Tibial artery (tissue), 4 donors: ENCODE measurements at regions of chr11 and their contacts with region 1.

Region 1: DNA sequence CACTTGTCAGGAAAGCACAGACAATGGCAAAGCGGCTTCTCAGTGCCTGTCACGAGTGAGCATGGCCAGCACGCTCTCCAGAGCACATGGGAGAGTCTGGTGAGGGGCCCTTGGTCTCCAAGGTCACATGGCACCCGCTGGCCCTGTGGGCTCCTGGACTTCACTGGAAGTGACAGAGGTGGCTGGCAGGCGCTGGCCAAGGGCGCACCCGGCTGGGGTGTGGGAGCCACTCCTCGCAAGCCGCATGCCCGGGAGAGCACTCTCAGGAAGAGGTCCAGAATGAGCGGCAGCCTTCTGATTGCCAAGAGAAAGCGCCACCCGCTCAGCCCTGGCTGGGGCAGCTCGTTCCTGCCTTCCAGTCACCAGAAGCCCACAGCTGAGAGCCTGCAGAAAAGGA is 17.1 kb upstream of the MOB2 start:
- DNase-seq: peak in 1 of 2 donors; percentile 93
- H3K4me3 ChIP-seq: peak overlapping the region in 1 of 2 donors; percentile 12
- H3K27ac ChIP-seq: peak overlapping the region; percentile 82 to 87
- H3K4me1 ChIP-seq: peaks cover 0 to 75% (median 65%) of the 10 kb centered on the region in 4 donors
- H3K27me3 ChIP-seq: no peaks in the 10 kb centered on the region
- CTCF ChIP-seq: no peak

Region 2: DNA sequence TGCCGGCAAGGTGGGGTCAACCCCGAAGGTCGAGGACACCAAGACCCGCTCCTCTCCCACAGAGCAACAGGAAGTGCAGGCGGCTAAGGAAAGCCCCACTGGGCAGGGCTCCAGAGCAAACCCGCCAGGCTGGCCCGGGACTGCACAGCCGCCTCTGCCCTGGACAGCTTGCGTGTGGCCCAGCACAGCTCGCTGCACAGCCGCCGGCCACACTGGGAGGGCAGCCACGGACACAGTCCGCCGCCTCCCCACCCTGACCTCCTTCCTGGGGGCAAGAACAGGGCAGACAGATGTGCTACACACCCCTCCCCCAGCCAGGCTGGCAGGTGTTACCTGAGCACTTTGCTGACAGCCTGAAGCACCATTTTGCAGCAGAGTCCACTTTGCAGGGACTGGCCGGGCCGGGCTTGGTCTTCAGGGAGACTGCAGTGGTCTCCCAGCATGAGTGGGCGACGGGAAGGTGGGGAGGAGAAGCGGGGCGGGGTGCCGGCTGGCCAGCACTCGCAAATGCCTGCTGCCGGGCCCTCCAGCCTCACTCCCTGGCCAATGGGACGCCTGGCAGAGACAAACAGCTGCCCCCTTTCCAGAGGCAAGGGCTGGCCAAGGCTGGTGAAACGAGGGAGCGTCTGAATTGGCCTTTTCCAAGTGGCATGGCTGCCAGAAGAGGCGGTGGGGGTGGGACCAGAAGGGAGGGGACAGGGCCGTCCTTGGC is 17.4 kb before region 1 on chr11 and contains the start of gene MOB2:
- intact Hi-C with region 1: loop called (anchors 2 kb)
- DNase-seq: peak; percentile 53 to 96
- H3K4me3 ChIP-seq: peak within 1 kb of the TSS; percentile 58 to 81
- H3K27ac ChIP-seq: peak within 1 kb of the TSS; percentile 94 to 96
- H3K4me1 ChIP-seq: peaks cover 0 to 86% (median 69%) of the 10 kb centered on the region in 4 donors
- H3K27me3 ChIP-seq: no peaks in the 10 kb centered on the region
- CTCF ChIP-seq: no peak